H1 (cell line): ENCODE measurements at regions of chr1 and their contacts with region 1.

Region 1: GRCh38 chr1:111030590-111030989 is 66.9 kb upstream of the LRIF1 start:
- DNase-seq: peak in 1 of 2 experiments; percentile 53
- H3K4me3 ChIP-seq: no peak overlapping the region
- H3K27ac ChIP-seq: no peak overlapping the region
- H3K4me1 ChIP-seq: no peaks in the 10 kb centered on the region
- H3K27me3 ChIP-seq: no peaks in the 10 kb centered on the region
- CTCF ChIP-seq: peak in 2 of 3 experiments; percentile 61 to 84; a peak in 3 of 4 replicates
- EP300 ChIP-seq: no peak
- POLR2A ChIP-seq: no peak
- RAD21 ChIP-seq: peak; percentile 31 to 49; a peak in 3 of 4 replicates

Region 2: GRCh38 chr1:110916669-110917306 is 113.8 kb before region 1 on chr1:
- CTCF ChIA-PET with region 1: no interaction called
- POLR2A ChIA-PET with region 1: no interaction called
- DNase-seq: no peak
- H3K4me3 ChIP-seq: no peak overlapping the region
- H3K27ac ChIP-seq: no peak overlapping the region
- H3K4me1 ChIP-seq: no peaks in the 10 kb centered on the region; a peak in 1 of 7 replicates
- H3K27me3 ChIP-seq: no peaks in the 10 kb centered on the region
- CTCF ChIP-seq: no peak
- EP300 ChIP-seq: no peak
- POLR2A ChIP-seq: no peak
- RAD21 ChIP-seq: no peak

Region 3: GRCh38 chr1:110927484-110928075 is 103.0 kb before region 1 on chr1:
- CTCF ChIA-PET with region 1: no interaction called
- POLR2A ChIA-PET with region 1: no interaction called
- DNase-seq: no peak
- H3K4me3 ChIP-seq: peak overlapping the region in 1 of 4 experiments; percentile 6; a peak in 2 of 8 replicates
- H3K27ac ChIP-seq: no peak overlapping the region
- H3K4me1 ChIP-seq: no peaks in the 10 kb centered on the region
- H3K27me3 ChIP-seq: no peaks in the 10 kb centered on the region
- CTCF ChIP-seq: no peak
- EP300 ChIP-seq: no peak
- POLR2A ChIP-seq: no peak
- RAD21 ChIP-seq: no peak

Region 4: GRCh38 chr1:110944806-110945205 is 85.8 kb before region 1 on chr1:
- CTCF ChIA-PET with region 1: no interaction called
- POLR2A ChIA-PET with region 1: no interaction called
- DNase-seq: no peak
- H3K4me3 ChIP-seq: no peak overlapping the region
- H3K27ac ChIP-seq: no peak overlapping the region
- H3K4me1 ChIP-seq: no peaks in the 10 kb centered on the region
- H3K27me3 ChIP-seq: no peaks in the 10 kb centered on the region
- CTCF ChIP-seq: no peak
- EP300 ChIP-seq: no peak
- POLR2A ChIP-seq: no peak
- RAD21 ChIP-seq: no peak

Region 5: DNA sequence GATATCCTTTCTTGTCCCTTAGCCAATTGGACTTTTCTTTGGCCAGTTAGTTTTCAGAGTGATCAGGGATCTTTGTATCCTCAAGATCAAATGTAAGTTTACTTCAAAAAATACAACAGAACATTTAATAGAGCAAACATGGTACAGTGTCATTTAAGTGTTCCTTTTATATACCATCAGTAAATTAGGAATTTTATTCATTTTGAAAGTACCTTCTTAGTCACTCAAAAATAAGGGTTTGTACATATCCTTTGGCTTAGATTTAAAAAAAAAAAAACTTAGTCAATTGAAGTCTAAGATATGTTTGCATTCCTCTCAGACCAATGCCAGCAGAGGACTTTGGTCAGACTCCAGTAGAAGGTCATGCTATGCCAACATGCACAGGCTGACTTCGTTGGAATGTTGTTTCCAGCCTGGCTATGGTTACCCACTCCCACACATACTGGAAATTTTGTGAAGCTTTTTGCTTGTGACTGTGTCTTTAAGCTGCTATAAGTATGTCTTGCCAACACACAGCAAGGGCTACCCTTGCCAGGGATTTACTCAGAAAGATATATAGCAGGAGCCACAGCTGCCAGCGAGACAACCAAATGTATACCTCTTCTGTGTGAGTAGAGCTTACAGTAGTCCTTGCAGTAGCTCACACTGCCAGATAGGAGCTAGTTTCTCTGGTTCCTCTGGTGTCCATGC is 14.6 kb after region 1 on chr1:
- CTCF ChIA-PET with region 1: interaction called, 15 read pairs
- POLR2A ChIA-PET with region 1: no interaction called
- DNase-seq: no peak
- H3K4me3 ChIP-seq: no peak overlapping the region
- H3K27ac ChIP-seq: no peak overlapping the region
- H3K4me1 ChIP-seq: no peaks in the 10 kb centered on the region
- H3K27me3 ChIP-seq: no peaks in the 10 kb centered on the region
- CTCF ChIP-seq: no peak
- EP300 ChIP-seq: no peak
- POLR2A ChIP-seq: no peak
- RAD21 ChIP-seq: no peak